ENCODE measurements at regions of chr14 and their contacts with region 1.

Region 1: GRCh38 chr14:100645192-100645990 is 58.2 kb upstream of the BEGAIN start:
- DNase-seq: peak; percentile 94
- ATAC-seq: peak; percentile 86
- H3K4me3 Mint-ChIP-seq: no peak overlapping the region
- H3K27ac Mint-ChIP-seq: no peak overlapping the region
- H3K4me1 Mint-ChIP-seq: peaks cover 35% of the 10 kb centered on the region
- H3K27me3 Mint-ChIP-seq: no peaks in the 10 kb centered on the region
- CTCF ChIP-seq: peak; percentile 82

Region 2: DNA sequence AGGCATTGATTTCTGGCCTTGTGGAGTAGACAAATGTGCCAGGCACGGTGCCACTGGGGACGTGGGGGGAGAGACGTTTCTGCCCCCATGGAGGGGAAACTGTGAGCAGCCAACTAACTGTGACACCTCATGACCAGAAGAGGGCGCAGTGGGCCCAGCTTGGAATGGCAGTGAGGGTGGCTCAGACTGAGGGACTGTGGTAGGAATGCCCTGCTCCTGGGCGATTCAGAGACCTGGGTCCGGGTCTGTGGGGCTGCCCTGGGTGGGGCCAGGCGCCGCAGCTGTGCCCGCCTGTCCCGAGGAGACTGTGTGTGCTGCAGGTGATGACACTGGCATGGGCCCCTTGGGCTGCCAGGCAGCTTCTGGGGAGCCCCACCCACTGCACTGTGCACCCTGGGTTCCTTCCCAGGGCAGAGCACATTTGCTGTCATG is 261.6 kb before region 1 on chr14:
- CTCF ChIA-PET with region 1: interaction called, 145 read pairs
- POLR2A ChIA-PET with region 1: interaction called, 3 read pairs
- intact Hi-C with region 1: loop called (anchors 2 kb)
- DNase-seq: peak; percentile 81
- ATAC-seq: peak; percentile 95
- H3K4me3 Mint-ChIP-seq: no peak overlapping the region
- H3K27ac Mint-ChIP-seq: no peak overlapping the region
- H3K4me1 Mint-ChIP-seq: peaks cover 16% of the 10 kb centered on the region
- H3K27me3 Mint-ChIP-seq: no peaks in the 10 kb centered on the region
- CTCF ChIP-seq: peak; percentile 92

Region 3: GRCh38 chr14:100524933-100525243 is 120.5 kb before region 1 on chr14:
- CTCF ChIA-PET with region 1: interaction called, 55 read pairs
- POLR2A ChIA-PET with region 1: no interaction called
- intact Hi-C with region 1: loop called (anchors 5 kb)
- DNase-seq: peak; percentile 56
- ATAC-seq: peak; percentile 47
- H3K4me3 Mint-ChIP-seq: no peak overlapping the region
- H3K27ac Mint-ChIP-seq: no peak overlapping the region
- H3K4me1 Mint-ChIP-seq: no peaks in the 10 kb centered on the region
- H3K27me3 Mint-ChIP-seq: no peaks in the 10 kb centered on the region
- CTCF ChIP-seq: peak; percentile 55

Region 4: DNA sequence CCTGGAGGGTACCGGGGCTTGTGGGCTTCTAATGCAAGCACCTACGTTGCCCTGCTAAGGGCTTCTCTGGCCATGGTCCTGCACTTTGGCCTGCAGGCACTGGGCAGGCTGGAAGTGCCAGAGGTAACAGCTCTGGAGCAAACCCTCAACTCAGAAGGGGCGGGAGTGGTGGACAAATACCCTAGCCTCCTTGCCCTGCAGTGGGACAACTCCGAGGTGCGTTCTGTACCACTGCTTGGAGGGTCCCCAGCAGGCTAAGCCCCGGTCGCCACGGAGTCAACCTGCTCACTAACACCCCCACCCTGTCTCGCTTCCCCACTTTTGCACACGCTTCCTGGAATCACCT is 37.8 kb before region 1 on chr14:
- CTCF ChIA-PET with region 1: interaction called, 10 read pairs
- POLR2A ChIA-PET with region 1: no interaction called
- intact Hi-C with region 1: no loop called
- DNase-seq: no peak
- ATAC-seq: no peak
- H3K4me3 Mint-ChIP-seq: no peak overlapping the region
- H3K27ac Mint-ChIP-seq: no peak overlapping the region
- H3K4me1 Mint-ChIP-seq: no peaks in the 10 kb centered on the region
- H3K27me3 Mint-ChIP-seq: peaks cover 8% of the 10 kb centered on the region
- CTCF ChIP-seq: no peak

Region 5: GRCh38 chr14:100629696-100630095 is 15.7 kb before region 1 on chr14:
- CTCF ChIA-PET with region 1: interaction called, 13 read pairs
- POLR2A ChIA-PET with region 1: no interaction called
- intact Hi-C with region 1: no loop called
- DNase-seq: no peak
- ATAC-seq: no peak
- H3K4me3 Mint-ChIP-seq: no peak overlapping the region
- H3K27ac Mint-ChIP-seq: no peak overlapping the region
- H3K4me1 Mint-ChIP-seq: no peaks in the 10 kb centered on the region
- H3K27me3 Mint-ChIP-seq: no peaks in the 10 kb centered on the region
- CTCF ChIP-seq: no peak

Region 6: GRCh38 chr14:100709289-100710284 is 64.2 kb after region 1 on chr14:
- CTCF ChIA-PET with region 1: no interaction called
- POLR2A ChIA-PET with region 1: no interaction called
- intact Hi-C with region 1: no loop called
- DNase-seq: peak; percentile 15
- ATAC-seq: no peak
- H3K4me3 Mint-ChIP-seq: no peak overlapping the region
- H3K27ac Mint-ChIP-seq: no peak overlapping the region
- H3K4me1 Mint-ChIP-seq: no peaks in the 10 kb centered on the region
- H3K27me3 Mint-ChIP-seq: peaks cover 12% of the 10 kb centered on the region
- CTCF ChIP-seq: peak; percentile 64

Measured in activated CD8-positive, alpha-beta T cell treated with anti-CD3 and anti-CD28 coated beads for 36 hours (primary cell).